Activated T-helper 2 cell treated with anti-CD3 and anti-CD28 coated beads, Interferon-gamma antibody, Interleukin-2, Interleukin-4, amounts not matched to agents 10 μg/mL and 5 μg/mL and 100 μg/mL, durations not matched to agents 14 hours and 24 hours and 36 hours (primary cell): ENCODE measurements at regions of chr10 and their contacts with region 1.

Region 1: GRCh38 chr10:75099952-75100763 is 11.3 kb upstream of the SAMD8 start:
- DNase-seq: peak; percentile 69
- H3K4me3 Mint-ChIP-seq: no peak overlapping the region
- H3K27ac Mint-ChIP-seq: no peak overlapping the region
- H3K4me1 Mint-ChIP-seq: peaks cover 3% of the 10 kb centered on the region
- H3K27me3 Mint-ChIP-seq: no peaks in the 10 kb centered on the region

Region 2: GRCh38 chr10:74244097-74244685 is 856.0 kb before region 1 on chr10:
- intact Hi-C with region 1: loop called (anchors 5 kb)
- DNase-seq: no peak
- H3K4me3 Mint-ChIP-seq: no peak overlapping the region
- H3K27ac Mint-ChIP-seq: no peak overlapping the region
- H3K4me1 Mint-ChIP-seq: no peaks in the 10 kb centered on the region
- H3K27me3 Mint-ChIP-seq: no peaks in the 10 kb centered on the region

Region 3: GRCh38 chr10:74262856-74263255 is 837.3 kb before region 1 on chr10:
- intact Hi-C with region 1: loop called (anchors 2 kb)
- DNase-seq: no peak
- H3K4me3 Mint-ChIP-seq: no peak overlapping the region
- H3K27ac Mint-ChIP-seq: no peak overlapping the region
- H3K4me1 Mint-ChIP-seq: peaks cover 13% of the 10 kb centered on the region
- H3K27me3 Mint-ChIP-seq: no peaks in the 10 kb centered on the region

Region 4: DNA sequence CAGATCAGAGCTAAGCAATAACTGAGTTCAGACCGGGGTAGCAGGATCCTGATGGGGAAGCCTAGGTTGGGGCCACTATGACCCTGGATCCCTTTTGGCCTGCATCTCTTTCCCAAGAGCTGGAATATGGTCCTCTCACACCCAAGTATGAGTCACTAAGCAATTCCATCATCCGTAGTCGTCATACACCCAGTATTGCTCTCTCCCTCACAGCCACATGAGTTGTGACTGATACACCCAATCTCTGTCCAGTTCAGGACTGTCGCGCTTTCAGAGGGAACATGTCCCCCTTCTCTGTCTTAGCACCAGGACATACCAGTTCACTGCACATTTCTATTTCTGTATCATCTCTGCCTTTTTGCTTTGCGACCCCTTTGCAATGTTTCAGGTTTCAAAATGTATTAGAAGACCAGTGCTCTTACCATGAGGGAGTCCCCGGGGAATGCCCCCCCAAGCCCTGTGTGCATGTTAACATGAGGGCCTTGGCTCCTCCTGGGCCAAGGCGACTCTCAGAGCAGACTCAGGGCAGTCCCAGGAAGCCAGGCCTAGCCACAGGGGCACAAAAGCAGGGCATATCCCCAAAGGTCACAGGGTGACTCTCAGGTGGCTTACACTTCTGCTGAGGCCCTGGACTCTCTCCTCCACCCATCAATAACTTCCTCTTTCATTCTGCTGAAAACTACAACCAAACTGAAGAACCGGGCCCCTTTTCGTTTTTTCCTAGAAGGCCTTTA is 64.0 kb before region 1 on chr10:
- intact Hi-C with region 1: no loop called
- DNase-seq: no peak
- H3K4me3 Mint-ChIP-seq: peak overlapping the region; percentile 3
- H3K27ac Mint-ChIP-seq: peak overlapping the region; percentile 88
- H3K4me1 Mint-ChIP-seq: peaks cover 51% of the 10 kb centered on the region
- H3K27me3 Mint-ChIP-seq: no peaks in the 10 kb centered on the region

Region 5: DNA sequence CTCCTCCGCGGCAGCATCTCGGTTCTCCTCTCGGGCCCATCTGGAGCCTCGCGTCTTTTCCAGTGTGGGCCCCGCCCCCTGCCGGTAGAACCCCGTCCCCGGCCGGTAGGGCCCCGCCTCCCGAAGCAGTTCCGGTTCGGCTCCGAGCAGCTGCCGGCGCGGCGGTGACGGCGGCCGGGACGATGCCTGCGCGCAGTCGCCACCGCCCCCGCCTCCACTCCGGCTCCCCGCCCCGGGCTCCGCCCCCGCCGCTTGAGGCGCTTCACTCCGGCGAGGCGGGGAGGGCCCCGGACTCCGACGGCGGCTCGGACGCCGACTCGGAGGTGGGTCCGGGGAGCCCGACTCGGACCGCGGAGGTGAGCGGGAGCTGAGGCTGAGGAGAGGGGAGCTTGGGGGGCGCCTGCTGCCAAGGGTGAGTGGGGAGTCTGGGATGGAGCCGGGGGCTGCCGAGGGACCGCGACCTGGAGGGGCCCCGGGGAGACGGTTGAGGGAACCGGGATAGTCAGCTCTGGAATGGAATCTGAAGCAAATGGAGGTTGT is 11.3 kb after region 1 on chr10 and contains the start of gene SAMD8:
- intact Hi-C with region 1: no loop called
- DNase-seq: peak; percentile 97
- H3K4me3 Mint-ChIP-seq: peak within 1 kb of the TSS; percentile 89
- H3K27ac Mint-ChIP-seq: peak within 1 kb of the TSS; percentile 90
- H3K4me1 Mint-ChIP-seq: peaks cover 43% of the 10 kb centered on the region
- H3K27me3 Mint-ChIP-seq: no peaks in the 10 kb centered on the region
- total RNA-seq, gene SAMD8: 14.9 and 15.6 TPM in 2 replicates